ENCODE measurements at regions of chr20 and their contacts with region 1.

Region 1: DNA sequence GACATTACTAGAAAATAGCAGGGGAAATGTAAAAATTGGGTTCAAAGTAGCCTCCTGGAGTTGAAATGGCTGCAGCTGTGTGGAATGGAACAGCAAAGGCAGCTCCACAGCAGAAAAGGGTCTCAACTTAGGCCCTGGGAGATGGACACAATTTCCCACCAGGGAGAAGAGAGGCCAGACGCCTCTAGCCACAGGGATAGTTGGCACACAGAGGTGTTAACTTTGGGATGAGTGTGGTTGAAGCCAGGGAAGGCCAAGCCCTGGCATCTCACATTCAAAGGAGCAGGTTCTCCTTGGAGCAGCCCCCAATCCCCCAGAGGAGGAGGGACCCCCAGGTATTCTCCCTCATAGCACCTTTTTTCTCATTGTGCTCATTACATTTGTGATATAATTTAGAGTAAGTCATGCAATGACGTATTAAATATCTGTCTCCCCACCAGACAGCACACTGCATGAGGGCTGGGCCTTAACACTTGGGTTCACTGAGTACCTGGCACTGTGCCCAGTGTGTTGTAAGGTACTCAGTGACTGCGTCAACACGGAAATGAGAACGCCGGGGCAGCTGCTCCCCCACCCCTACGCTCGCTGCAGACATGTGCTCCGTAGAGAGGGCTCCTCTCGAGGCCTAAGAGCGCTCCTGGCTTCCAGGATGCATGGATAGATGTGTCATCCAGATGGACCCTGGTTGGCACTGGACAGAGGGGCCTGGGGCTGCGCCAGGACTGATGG is 76.0 kb upstream of the CD93 start:
- DNase-seq: no peak
- ATAC-seq: peak; percentile 52
- H3K4me3 ChIP-seq: no peak overlapping the region
- H3K27ac ChIP-seq: no peak overlapping the region
- H3K4me1 ChIP-seq: peaks cover 31% of the 10 kb centered on the region
- H3K27me3 ChIP-seq: no peaks in the 10 kb centered on the region
- CTCF ChIP-seq: no peak
- EP300 ChIP-seq: no peak
- POLR2A ChIP-seq: no peak
- RAD21 ChIP-seq: no peak

Region 2: GRCh38 chr20:23147964-23148730 is 14.0 kb before region 1 on chr20:
- CTCF ChIA-PET with region 1: interaction called, 10 read pairs
- POLR2A ChIA-PET with region 1: interaction called, 5 read pairs
- RAD21 ChIA-PET with region 1: interaction called, 12 read pairs
- SMC1A ChIA-PET with region 1: interaction called, 58 read pairs
- in situ Hi-C with region 1: no loop called
- intact Hi-C with region 1: no loop called
- DNase-seq: peak; percentile 74
- ATAC-seq: peak; percentile 84
- H3K4me3 ChIP-seq: no peak overlapping the region
- H3K27ac ChIP-seq: peak overlapping the region; percentile 68
- H3K4me1 ChIP-seq: peaks cover 30% of the 10 kb centered on the region
- H3K27me3 ChIP-seq: no peaks in the 10 kb centered on the region
- CTCF ChIP-seq: no peak
- EP300 ChIP-seq: no peak
- POLR2A ChIP-seq: peak; percentile 66
- RAD21 ChIP-seq: no peak

Region 3: DNA sequence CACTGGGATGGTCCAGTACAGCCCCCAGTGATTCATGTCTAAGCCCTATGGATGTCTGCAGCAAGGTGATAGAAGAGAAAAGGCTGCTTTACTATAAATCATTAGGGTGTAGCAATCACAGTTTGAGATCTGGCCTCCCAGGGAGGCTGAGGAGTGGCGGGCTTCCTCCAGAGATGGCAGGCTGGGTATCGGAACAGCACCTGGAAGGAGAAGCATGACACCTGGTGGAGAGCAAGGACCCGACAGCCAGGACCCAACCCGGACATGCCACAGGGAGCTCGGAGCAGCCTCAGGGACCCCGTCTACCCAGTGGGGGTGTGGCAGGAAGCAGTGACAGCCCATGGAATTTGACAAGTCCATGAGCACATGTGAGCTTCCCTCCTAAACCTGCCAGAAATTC is 38.8 kb after region 1 on chr20:
- CTCF ChIA-PET with region 1: interaction called, 12 read pairs
- POLR2A ChIA-PET with region 1: no interaction called
- RAD21 ChIA-PET with region 1: interaction called, 4 read pairs
- SMC1A ChIA-PET with region 1: interaction called, 5 read pairs
- in situ Hi-C with region 1: no loop called
- intact Hi-C with region 1: no loop called
- DNase-seq: no peak
- ATAC-seq: peak; percentile 84
- H3K4me3 ChIP-seq: no peak overlapping the region
- H3K27ac ChIP-seq: no peak overlapping the region
- H3K4me1 ChIP-seq: no peaks in the 10 kb centered on the region
- H3K27me3 ChIP-seq: peaks cover 0 to 4% of the 10 kb centered on the region in 2 experiments; a peak in 1 of 4 replicates
- CTCF ChIP-seq: peak; percentile 36 to 54 (median 40); a peak in 5 of 6 replicates
- EP300 ChIP-seq: no peak
- POLR2A ChIP-seq: no peak
- RAD21 ChIP-seq: peak; percentile 53

Measured in GM12878 (cell line).